ENCODE measurements at regions of chr19 and their contacts with region 1.

Region 1: GRCh38 chr19:49570138-49570856 is 10.1 kb downstream of the NOSIP start:
- DNase-seq: peak; percentile 81
- H3K4me3 Mint-ChIP-seq: peak overlapping the region; percentile 48
- H3K27ac Mint-ChIP-seq: peak overlapping the region; percentile 99
- H3K4me1 Mint-ChIP-seq: peaks cover 72% of the 10 kb centered on the region
- H3K27me3 Mint-ChIP-seq: no peaks in the 10 kb centered on the region

Region 2: GRCh38 chr19:49473868-49474544 is 96.3 kb before region 1 on chr19 and contains the start of gene FLT3LG:
- CTCF ChIA-PET with region 1: interaction called, 29 read pairs
- POLR2A ChIA-PET with region 1: interaction called, 6 read pairs
- DNase-seq: peak; percentile 94
- H3K4me3 Mint-ChIP-seq: peak within 1 kb of the TSS; percentile 97
- H3K27ac Mint-ChIP-seq: peak within 1 kb of the TSS; percentile 92
- H3K4me1 Mint-ChIP-seq: peaks cover 60% of the 10 kb centered on the region
- H3K27me3 Mint-ChIP-seq: no peaks in the 10 kb centered on the region
- total RNA-seq, gene FLT3LG: 187 to 197 TPM

Region 3: DNA sequence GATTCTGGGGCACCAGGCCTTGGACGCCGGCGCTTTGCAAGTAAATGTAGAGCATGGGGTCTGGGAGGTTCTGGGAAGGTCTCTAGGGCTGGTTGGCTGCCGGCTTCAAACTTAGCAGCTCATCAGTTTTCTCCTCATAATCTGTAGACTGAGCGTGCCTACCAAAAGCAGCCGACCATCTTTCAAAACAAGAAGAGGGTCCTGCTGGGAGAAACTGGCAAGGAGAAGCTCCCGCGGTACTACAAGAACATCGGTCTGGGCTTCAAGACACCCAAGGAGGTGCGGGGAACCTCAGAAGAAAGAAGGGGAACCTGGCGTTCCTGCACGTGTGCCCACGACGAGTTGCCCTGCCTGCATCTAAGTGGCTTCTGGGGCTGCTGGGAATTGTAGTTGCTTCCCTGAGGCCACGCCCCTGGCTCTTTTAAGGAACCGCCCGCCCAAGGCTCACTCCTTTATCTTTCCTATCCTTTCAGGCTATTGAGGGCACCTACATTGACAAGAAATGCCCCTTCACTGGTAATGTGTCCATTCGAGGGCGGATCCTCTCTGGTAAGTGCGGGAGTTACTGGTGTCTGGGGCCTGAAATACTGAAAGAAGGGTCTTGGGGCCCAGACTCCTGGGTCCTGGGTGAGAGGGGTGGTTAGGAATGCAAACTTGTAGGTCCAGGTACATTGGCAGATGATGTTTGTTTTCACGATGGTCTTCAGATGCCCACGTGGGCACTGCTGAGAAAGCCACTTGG is 73.1 kb before region 1 on chr19:
- CTCF ChIA-PET with region 1: interaction called, 255 read pairs
- POLR2A ChIA-PET with region 1: interaction called, 12 read pairs
- DNase-seq: peak; percentile 84
- H3K4me3 Mint-ChIP-seq: peak overlapping the region; percentile 98
- H3K27ac Mint-ChIP-seq: peak overlapping the region; percentile 99
- H3K4me1 Mint-ChIP-seq: peaks cover 67% of the 10 kb centered on the region
- H3K27me3 Mint-ChIP-seq: no peaks in the 10 kb centered on the region

Region 4: GRCh38 chr19:49512970-49513745 is 57.1 kb before region 1 on chr19:
- CTCF ChIA-PET with region 1: interaction called, 255 read pairs
- POLR2A ChIA-PET with region 1: interaction called, 11 read pairs
- DNase-seq: no peak
- H3K4me3 Mint-ChIP-seq: peak overlapping the region; percentile 69
- H3K27ac Mint-ChIP-seq: peak overlapping the region; percentile 62
- H3K4me1 Mint-ChIP-seq: peaks cover 25% of the 10 kb centered on the region
- H3K27me3 Mint-ChIP-seq: no peaks in the 10 kb centered on the region

Region 5: DNA sequence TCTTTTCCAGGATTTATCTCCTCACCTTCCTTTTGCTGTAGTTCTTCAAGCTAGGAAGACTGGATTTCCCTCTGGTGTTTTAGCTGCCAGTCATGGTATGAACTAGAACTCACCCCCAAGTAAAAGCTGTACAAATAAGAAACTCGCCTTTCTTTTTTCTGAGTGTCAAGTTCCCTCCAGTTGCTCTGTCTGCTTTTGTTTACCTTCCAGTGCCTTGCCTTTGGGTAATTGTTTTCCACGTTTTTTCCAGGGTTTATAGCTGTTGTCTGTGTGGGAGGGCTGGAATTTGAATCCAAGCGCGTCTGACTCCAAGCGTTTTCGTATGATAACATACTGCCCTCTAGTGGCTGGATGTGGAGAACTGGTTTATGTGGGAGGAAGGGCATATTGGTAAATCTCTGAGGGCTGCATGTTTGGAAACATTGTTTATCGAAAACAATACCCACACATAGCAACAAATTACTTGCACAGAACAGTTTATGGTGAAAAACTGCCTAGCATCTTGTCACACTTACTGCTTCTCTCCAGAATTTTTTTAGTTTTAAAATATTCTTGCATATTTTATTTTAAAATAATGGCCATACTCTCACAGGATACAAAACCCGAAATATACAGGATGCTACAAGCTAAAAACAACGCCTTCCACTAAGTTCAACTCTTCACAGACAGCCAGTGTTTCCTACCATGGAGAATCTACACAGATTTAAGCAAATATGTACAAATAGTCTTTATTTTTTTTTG is 23.3 kb before region 1 on chr19:
- CTCF ChIA-PET with region 1: interaction called, 297 read pairs
- POLR2A ChIA-PET with region 1: interaction called, 43 read pairs
- DNase-seq: peak; percentile 69
- H3K4me3 Mint-ChIP-seq: peak overlapping the region; percentile 56
- H3K27ac Mint-ChIP-seq: peak overlapping the region; percentile 58
- H3K4me1 Mint-ChIP-seq: peaks cover 45% of the 10 kb centered on the region
- H3K27me3 Mint-ChIP-seq: peaks cover 6% of the 10 kb centered on the region

Region 6: GRCh38 chr19:49580264-49581006 is 10.1 kb after region 1 on chr19 and contains the start of gene NOSIP:
- CTCF ChIA-PET with region 1: interaction called, 28 read pairs
- POLR2A ChIA-PET with region 1: interaction called, 27 read pairs
- DNase-seq: peak; percentile 98
- H3K4me3 Mint-ChIP-seq: peak within 1 kb of the TSS; percentile 89
- H3K27ac Mint-ChIP-seq: peak within 1 kb of the TSS; percentile 82
- H3K4me1 Mint-ChIP-seq: peaks cover 33% of the 10 kb centered on the region
- H3K27me3 Mint-ChIP-seq: no peaks in the 10 kb centered on the region
- total RNA-seq, gene NOSIP: 162 to 163 TPM

Region 7: DNA sequence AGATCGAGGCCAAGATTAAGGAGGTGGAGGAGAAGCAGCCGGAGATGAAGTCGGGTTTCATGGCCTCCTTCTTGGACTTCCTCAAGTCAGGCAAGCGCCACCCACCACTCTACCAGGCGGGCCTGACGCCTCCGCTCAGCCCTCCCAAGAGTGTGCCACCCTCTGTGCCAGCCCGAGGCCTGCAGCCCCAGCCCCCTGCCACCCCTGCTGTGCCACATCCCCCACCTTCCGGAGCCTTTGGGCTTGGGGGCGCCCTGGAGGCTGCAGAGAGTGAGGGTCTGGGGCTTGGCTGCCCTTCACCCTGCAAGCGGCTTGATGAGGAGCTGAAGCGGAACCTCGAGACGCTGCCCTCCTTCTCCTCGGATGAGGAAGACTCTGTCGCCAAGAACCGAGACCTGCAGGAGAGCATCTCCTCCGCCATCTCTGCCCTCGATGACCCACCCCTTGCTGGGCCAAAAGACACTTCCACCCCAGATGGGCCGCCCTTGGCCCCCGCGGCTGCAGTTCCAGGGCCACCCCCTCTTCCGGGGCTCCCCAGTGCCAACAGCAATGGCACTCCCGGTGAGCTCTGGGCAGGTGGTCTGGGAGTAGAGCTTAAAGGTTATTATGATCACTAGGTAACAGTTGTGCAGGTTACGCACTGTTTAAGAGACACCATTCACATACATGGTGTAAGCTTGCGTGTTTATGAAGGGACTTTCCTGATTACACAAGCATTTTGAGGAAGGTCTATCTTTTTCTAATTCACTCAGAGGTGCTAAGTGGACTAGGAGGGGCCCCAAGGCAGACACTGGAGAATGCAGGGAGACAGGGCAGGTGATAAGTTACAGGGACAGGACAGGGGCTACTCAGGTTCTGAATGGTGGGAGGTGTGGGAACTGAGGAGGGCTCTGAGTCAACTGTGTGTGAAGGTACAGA is 29.3 kb after region 1 on chr19:
- CTCF ChIA-PET with region 1: no interaction called
- POLR2A ChIA-PET with region 1: no interaction called
- DNase-seq: no peak
- H3K4me3 Mint-ChIP-seq: no peak overlapping the region
- H3K27ac Mint-ChIP-seq: no peak overlapping the region
- H3K4me1 Mint-ChIP-seq: peaks cover under 1% of the 10 kb centered on the region
- H3K27me3 Mint-ChIP-seq: no peaks in the 10 kb centered on the region

Region 8: DNA sequence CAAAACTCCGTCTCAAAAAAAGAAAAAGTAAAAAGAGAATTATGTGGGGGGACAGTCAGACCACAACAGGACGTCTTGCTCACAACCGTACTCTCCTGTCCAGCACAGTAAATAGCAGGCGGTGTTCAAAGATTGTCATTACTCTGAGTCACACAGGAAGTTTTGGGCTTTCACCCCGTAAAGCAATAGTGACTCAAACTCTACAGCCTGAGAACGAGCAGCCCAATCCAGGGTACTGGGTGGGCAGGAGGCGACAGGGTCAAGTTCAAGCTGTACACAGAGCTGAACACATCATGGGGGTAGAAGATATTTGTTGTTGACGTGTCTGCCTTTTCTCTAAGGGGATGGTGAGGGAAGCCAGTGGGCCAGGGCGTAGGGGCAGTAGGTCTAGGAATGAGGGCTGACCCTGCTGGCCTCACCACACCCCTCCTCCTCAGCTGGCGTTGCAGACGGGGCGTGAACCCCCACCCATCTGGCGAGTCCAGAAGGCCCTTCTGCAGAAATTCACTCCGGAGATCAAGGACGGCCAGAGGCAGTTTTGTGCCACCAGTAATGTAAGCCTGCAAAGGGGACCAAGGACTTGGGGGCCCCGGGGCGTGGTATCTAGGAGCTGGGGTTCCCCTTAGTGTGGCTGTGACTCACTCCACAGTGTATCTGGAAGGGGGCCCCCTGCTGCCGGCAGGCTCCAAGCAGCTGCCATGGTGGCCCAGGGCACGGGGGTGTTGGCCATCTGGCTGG is 44.0 kb after region 1 on chr19:
- CTCF ChIA-PET with region 1: no interaction called
- POLR2A ChIA-PET with region 1: no interaction called
- DNase-seq: no peak
- H3K4me3 Mint-ChIP-seq: no peak overlapping the region
- H3K27ac Mint-ChIP-seq: peak overlapping the region; percentile 70
- H3K4me1 Mint-ChIP-seq: peaks cover 17% of the 10 kb centered on the region
- H3K27me3 Mint-ChIP-seq: no peaks in the 10 kb centered on the region

Region 9: GRCh38 chr19:49631014-49631588 is 60.8 kb after region 1 on chr19:
- CTCF ChIA-PET with region 1: no interaction called
- POLR2A ChIA-PET with region 1: no interaction called
- DNase-seq: no peak
- H3K4me3 Mint-ChIP-seq: no peak overlapping the region
- H3K27ac Mint-ChIP-seq: no peak overlapping the region
- H3K4me1 Mint-ChIP-seq: peaks cover 3% of the 10 kb centered on the region
- H3K27me3 Mint-ChIP-seq: no peaks in the 10 kb centered on the region

Region 10: GRCh38 chr19:49676690-49677231 is 106.5 kb after region 1 on chr19:
- CTCF ChIA-PET with region 1: interaction called, 21 read pairs
- POLR2A ChIA-PET with region 1: interaction called, 13 read pairs
- DNase-seq: peak; percentile 99
- H3K4me3 Mint-ChIP-seq: peak overlapping the region; percentile 90
- H3K27ac Mint-ChIP-seq: peak overlapping the region; percentile 89
- H3K4me1 Mint-ChIP-seq: peaks cover 43% of the 10 kb centered on the region
- H3K27me3 Mint-ChIP-seq: no peaks in the 10 kb centered on the region

Measured in activated CD4-positive, alpha-beta memory T cell treated with anti-CD3 and anti-CD28 coated beads, Interleukin-2, amount 10 ng/mL, durations not matched to agents 7 days and 5 days (primary cell).